Dendritic cell treated with granulocyte-macrophage colony-stimulating factor and Interleukin-4, amounts not matched to agents 40 ng/mL and 50 ng/mL, for 4 days (primary cell): ENCODE measurements at regions of chr12 and their contacts with region 1.

Region 1: DNA sequence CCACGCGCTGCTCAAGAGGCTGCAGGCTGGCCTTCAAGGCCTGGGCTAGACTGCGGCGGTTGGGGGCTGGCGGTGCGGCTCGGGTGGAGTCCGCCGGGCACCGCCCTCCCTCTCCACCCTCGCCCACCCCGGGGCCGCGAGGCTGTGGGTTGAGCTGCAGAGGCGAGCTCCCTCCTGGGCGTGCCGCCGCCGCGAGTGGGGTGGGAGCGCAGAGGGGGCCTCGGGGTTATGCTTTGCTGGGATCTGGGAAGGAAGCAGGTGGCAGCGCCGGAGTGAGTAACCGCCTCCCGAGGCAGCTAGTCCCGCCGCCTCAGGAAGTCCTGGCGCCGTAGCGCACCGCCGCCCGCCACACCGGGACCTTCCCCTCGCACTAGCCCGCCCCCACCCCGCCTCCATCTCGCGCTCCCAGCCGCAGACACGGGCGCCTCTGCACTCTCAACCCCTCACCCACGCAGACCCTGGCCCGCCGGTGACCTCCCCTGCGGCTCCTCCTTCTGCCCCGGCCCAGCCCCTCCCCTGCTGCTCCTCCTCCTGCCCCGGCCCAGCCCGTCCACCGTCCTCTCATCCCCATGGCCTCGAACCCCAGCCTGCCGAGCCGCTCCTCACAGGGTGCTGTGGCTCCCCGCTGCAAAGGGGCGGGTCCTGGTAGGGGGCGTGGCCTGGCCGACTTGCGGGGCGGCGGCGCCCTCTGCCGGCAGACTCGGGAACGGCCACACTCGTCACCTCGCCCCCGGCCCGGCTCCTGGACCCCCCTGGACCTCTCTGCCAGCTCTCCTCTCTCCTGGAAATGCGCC is 16.6 kb downstream of the TAMALIN start:
- H3K4me3 Mint-ChIP-seq: peak overlapping the region; percentile 81
- H3K27ac Mint-ChIP-seq: peak overlapping the region; percentile 99
- H3K4me1 Mint-ChIP-seq: peaks cover 50% of the 10 kb centered on the region
- H3K27me3 Mint-ChIP-seq: peaks cover 24% of the 10 kb centered on the region

Region 2: DNA sequence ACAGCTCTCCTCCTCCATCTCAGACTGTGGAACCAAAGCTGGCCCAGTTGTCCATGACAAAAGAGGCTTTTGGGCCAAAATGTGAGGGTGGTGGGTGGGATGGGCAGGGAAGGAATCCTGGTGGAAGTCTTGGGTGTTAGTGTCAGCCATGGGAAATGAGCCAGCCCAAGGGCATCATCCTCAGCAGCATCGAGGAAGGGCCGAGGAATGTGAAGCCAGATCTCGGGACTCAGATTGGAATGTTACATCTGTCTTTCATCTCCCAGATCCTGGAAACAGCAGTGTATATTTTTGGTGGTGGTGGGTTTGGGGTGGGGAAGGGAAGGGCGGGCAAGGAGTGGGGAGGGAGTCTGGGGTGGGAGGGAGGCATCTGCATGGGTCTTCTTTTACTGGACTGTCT is 28.4 kb before region 1 on chr12:
- intact Hi-C with region 1: loop called (anchors 1 kb)
- H3K4me3 Mint-ChIP-seq: no peak overlapping the region
- H3K27ac Mint-ChIP-seq: no peak overlapping the region
- H3K4me1 Mint-ChIP-seq: peaks cover 13% of the 10 kb centered on the region
- H3K27me3 Mint-ChIP-seq: no peaks in the 10 kb centered on the region

Region 3: GRCh38 chr12:52004042-52004648 is 19.2 kb before region 1 on chr12:
- intact Hi-C with region 1: loop called (anchors 1 kb)
- H3K4me3 Mint-ChIP-seq: no peak overlapping the region
- H3K27ac Mint-ChIP-seq: no peak overlapping the region
- H3K4me1 Mint-ChIP-seq: peaks cover 68% of the 10 kb centered on the region
- H3K27me3 Mint-ChIP-seq: peaks cover 48% of the 10 kb centered on the region

Region 4: GRCh38 chr12:52050761-52051541 is 27.6 kb after region 1 on chr12 and contains the start of gene NR4A1:
- intact Hi-C with region 1: loop called (anchors 2 kb)
- H3K4me3 Mint-ChIP-seq: peak within 1 kb of the TSS; percentile 81
- H3K27ac Mint-ChIP-seq: peak within 1 kb of the TSS; percentile 89
- H3K4me1 Mint-ChIP-seq: peaks cover 50% of the 10 kb centered on the region
- H3K27me3 Mint-ChIP-seq: peaks cover 36% of the 10 kb centered on the region

Region 5: DNA sequence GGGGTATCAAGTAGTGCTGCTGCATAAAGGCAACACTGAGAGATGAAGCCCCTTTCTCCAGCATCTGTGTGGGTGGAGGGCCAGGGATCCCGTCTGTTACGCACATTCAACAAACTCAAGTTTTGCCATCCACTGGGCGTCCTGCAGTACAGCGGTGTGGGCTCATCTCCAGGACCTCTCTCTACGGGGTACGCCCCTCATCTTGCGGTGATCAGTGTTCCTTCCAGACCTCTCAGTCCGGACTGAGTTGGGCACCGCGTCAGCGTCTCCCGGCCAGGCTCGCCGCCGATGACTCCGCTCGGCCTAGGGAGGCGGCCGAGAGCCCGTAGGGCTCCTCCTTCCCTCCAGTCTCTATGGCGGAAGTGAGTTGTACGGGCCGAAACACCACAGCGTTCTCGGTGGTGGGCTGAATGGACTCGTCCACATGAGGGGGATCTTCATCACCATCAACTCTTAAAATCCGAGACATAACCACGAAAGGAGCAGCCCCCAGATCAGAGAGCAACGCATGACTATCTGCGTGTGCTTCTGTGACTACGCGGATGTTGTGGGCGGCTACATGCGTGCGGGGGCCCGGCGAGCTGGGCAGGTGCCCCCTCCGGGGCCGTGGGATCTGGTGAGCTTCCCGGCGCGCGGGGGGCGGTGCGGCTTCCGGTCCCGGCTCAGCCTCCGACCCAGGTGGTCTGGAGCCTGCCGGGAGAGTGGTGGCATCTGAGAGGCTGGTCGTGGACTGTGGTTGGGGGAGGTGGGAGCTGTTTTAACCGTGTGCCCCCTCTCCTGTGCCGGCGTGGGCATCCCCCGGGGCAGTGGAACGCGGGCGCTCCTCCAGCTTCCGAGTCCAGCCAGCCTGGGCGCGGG is 46.2 kb after region 1 on chr12 and contains the start of gene ATG101:
- intact Hi-C with region 1: loop called (anchors 1 kb)
- H3K4me3 Mint-ChIP-seq: peak within 1 kb of the TSS; percentile 88
- H3K27ac Mint-ChIP-seq: peak within 1 kb of the TSS; percentile 97
- H3K4me1 Mint-ChIP-seq: peaks cover 56% of the 10 kb centered on the region
- H3K27me3 Mint-ChIP-seq: peaks cover 17% of the 10 kb centered on the region

Region 6: DNA sequence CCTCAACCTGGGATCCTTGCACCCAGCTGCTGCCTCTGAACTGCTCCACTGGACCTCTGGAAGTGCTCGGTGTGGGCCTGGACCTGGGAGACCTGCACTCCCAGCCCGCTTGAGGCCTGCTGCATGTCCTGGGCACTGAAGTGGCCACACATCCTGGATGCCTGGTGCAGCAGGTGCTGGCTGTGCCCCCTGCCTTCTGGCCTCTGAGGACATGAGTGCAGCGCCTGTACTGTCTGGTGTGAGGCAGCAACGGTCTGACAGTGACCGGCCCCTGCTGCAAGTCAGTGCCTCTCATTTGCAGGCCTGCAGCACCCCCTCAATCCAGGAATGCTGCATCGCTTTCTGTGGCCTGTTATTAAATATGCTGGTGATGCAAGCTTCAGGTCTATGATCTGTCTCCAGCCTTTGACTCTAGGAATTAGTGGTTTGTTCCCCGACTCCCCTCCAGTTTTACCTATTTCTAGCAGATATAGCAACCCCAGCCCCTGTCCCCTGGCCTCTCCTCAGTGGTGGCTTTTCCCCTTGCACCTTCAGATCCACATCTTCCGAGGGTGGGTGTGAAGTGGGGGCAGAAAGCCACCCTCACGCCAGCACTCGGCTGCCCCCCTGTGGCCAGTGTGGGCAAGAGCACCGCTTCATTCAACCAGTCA is 59.7 kb after region 1 on chr12:
- intact Hi-C with region 1: loop called (anchors 1 kb)
- H3K4me3 Mint-ChIP-seq: no peak overlapping the region
- H3K27ac Mint-ChIP-seq: no peak overlapping the region
- H3K4me1 Mint-ChIP-seq: peaks cover 26% of the 10 kb centered on the region
- H3K27me3 Mint-ChIP-seq: peaks cover 29% of the 10 kb centered on the region

Region 7: GRCh38 chr12:52121824-52122539 is 98.6 kb after region 1 on chr12:
- intact Hi-C with region 1: loop called (anchors 1 kb)
- H3K4me3 Mint-ChIP-seq: no peak overlapping the region
- H3K27ac Mint-ChIP-seq: peak overlapping the region; percentile 48
- H3K4me1 Mint-ChIP-seq: peaks cover 48% of the 10 kb centered on the region
- H3K27me3 Mint-ChIP-seq: peaks cover 53% of the 10 kb centered on the region